ENCODE measurements at regions of chr6 and their contacts with region 1.

Region 1: DNA sequence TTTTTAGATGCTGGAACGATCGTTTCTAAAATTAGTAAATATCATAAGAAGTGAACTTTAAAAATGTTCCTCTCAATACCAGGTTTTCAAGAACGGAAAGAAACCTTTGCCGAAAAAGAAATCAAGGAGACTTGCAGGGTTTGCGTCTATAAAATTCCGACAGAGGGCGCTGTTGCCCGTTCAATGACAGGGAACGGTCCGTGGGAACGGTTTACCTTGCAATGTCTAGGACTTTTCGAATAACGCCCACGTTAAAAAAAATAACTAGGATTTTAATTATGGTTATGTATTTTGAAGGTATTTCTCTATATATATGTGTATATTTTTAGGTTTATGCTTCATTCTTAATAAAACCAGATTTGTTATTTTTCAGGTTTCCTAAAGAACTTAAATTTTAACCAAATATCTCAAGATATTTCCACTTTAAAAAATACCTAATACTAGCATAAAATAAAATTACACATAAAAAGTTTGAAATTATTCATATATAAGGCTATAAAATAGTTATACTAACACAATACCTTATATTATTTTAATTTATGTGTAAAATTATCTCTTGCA is 2.5 kb upstream of the TFAP2B start:
- DNase-seq: peak; percentile 91
- ATAC-seq: peak; percentile 87
- H3K4me3 ChIP-seq: peak overlapping the region; percentile 92
- H3K27ac ChIP-seq: no peak overlapping the region
- H3K4me1 ChIP-seq: peaks cover 8% of the 10 kb centered on the region; the same call in 1 of the 2 replicates
- H3K27me3 ChIP-seq: peaks cover 18% of the 10 kb centered on the region
- CTCF ChIP-seq: peak; percentile 77

Region 2: GRCh38 chr6:50990750-50991446 is 174.7 kb after region 1 on chr6:
- CTCF ChIA-PET with region 1: no interaction called
- POLR2A ChIA-PET with region 1: no interaction called
- intact Hi-C with region 1: no loop called
- DNase-seq: peak; percentile 81
- ATAC-seq: peak; percentile 83
- H3K4me3 ChIP-seq: no peak overlapping the region
- H3K27ac ChIP-seq: 0 out of 2 replicates have a peak overlapping the region, but pooled peaks have one; percentile 23
- H3K4me1 ChIP-seq: peaks cover 27% of the 10 kb centered on the region
- H3K27me3 ChIP-seq: no peaks in the 10 kb centered on the region
- CTCF ChIP-seq: no peak

Region 3: GRCh38 chr6:51025082-51025777 is 209.0 kb after region 1 on chr6:
- CTCF ChIA-PET with region 1: no interaction called
- POLR2A ChIA-PET with region 1: no interaction called
- intact Hi-C with region 1: loop called (anchors 5 kb)
- DNase-seq: peak; percentile 97
- ATAC-seq: peak; percentile 64
- H3K4me3 ChIP-seq: no peak overlapping the region
- H3K27ac ChIP-seq: peak overlapping the region; percentile 85
- H3K4me1 ChIP-seq: peaks cover 59% of the 10 kb centered on the region
- H3K27me3 ChIP-seq: no peaks in the 10 kb centered on the region
- CTCF ChIP-seq: no peak

Region 4: DNA sequence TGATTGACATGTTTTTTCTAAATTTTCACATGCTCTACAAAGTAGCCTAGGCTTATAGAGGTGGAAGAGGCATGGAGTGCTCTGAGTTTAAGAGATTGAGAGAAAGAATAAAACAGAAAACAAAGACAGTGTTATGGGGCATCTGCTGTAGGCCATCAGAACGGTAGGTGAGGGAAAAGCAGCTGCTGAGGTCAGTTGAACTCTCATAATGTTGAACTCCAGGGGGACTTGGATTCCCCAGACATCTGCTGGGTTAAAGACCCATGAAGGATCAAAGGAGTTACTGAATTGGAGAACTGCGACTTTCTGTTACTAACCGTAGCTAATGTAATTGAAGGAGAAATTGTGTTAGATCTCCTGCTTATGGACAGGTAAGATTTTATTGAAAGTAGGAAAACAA is 336.4 kb after region 1 on chr6:
- CTCF ChIA-PET with region 1: no interaction called
- POLR2A ChIA-PET with region 1: no interaction called
- intact Hi-C with region 1: loop called (anchors 1 kb)
- DNase-seq: no peak
- ATAC-seq: no peak
- H3K4me3 ChIP-seq: no peak overlapping the region
- H3K27ac ChIP-seq: no peak overlapping the region
- H3K4me1 ChIP-seq: peaks cover 15% of the 10 kb centered on the region
- H3K27me3 ChIP-seq: no peaks in the 10 kb centered on the region
- CTCF ChIP-seq: no peak

Region 5: DNA sequence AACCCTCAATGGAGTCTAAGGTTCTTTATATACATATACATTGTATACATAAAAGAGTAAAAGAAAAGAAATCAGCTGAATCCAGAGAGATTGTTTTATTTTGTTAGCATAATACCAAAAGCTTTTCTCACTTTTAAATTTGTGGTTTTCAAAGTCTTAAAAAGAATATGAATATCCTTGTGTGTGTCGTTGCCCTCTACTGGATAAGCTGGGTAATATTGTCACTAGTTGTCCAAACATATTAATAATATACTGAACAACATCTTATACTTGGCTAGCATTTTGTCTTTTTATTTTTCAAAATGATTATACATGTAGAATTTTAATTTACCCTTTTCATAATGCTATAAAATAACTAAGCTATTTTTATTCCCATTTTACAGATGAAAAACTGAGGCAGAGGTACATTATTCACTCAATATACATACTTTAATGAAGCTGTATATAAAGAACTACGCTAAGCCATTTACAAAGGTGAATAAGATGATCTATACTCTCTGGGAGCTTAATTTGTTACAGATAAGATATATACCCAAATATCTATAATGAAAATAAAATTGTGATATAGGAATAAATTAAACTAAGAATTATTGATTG is 534.2 kb after region 1 on chr6:
- CTCF ChIA-PET with region 1: no interaction called
- POLR2A ChIA-PET with region 1: no interaction called
- intact Hi-C with region 1: loop called (anchors 1 kb)
- DNase-seq: peak; percentile 45
- ATAC-seq: no peak
- H3K4me3 ChIP-seq: no peak overlapping the region
- H3K27ac ChIP-seq: no peak overlapping the region
- H3K4me1 ChIP-seq: no peaks in the 10 kb centered on the region
- H3K27me3 ChIP-seq: no peaks in the 10 kb centered on the region
- CTCF ChIP-seq: peak; percentile 74

Region 6: GRCh38 chr6:51541847-51542246 is 725.7 kb after region 1 on chr6:
- CTCF ChIA-PET with region 1: no interaction called
- POLR2A ChIA-PET with region 1: no interaction called
- intact Hi-C with region 1: loop called (anchors 1 kb)
- DNase-seq: peak; percentile 65
- ATAC-seq: peak; percentile 64
- H3K4me3 ChIP-seq: no peak overlapping the region
- H3K27ac ChIP-seq: no peak overlapping the region
- H3K4me1 ChIP-seq: no peaks in the 10 kb centered on the region
- H3K27me3 ChIP-seq: peaks cover 31% of the 10 kb centered on the region
- CTCF ChIP-seq: peak; percentile 57

Region 7: GRCh38 chr6:51855310-51856082 is 1039.3 kb after region 1 on chr6:
- CTCF ChIA-PET with region 1: no interaction called
- POLR2A ChIA-PET with region 1: no interaction called
- intact Hi-C with region 1: loop called (anchors 10 kb)
- DNase-seq: peak; percentile 94
- ATAC-seq: peak; percentile 59
- H3K4me3 ChIP-seq: no peak overlapping the region
- H3K27ac ChIP-seq: peak overlapping the region; percentile 86; the same call in 1 of the 2 replicates
- H3K4me1 ChIP-seq: peaks cover 31% of the 10 kb centered on the region
- H3K27me3 ChIP-seq: no peaks in the 10 kb centered on the region
- CTCF ChIP-seq: peak; percentile 92

Region 8: GRCh38 chr6:51959744-51960383 is 1143.7 kb after region 1 on chr6:
- CTCF ChIA-PET with region 1: no interaction called
- POLR2A ChIA-PET with region 1: no interaction called
- intact Hi-C with region 1: loop called (anchors 5 kb)
- DNase-seq: peak; percentile 91
- ATAC-seq: peak; percentile 93
- H3K4me3 ChIP-seq: no peak overlapping the region
- H3K27ac ChIP-seq: no peak overlapping the region
- H3K4me1 ChIP-seq: 0 out of 2 replicates have a peak, but pooled peaks cover 3% of the 10 kb centered on the region
- H3K27me3 ChIP-seq: no peaks in the 10 kb centered on the region
- CTCF ChIP-seq: peak; percentile 96